ENCODE measurements at regions of chr14 and their contacts with region 1.

Region 1: GRCh38 chr14:35438910-35439713 is 34.6 kb upstream of the NFKBIA start:
- DNase-seq: peak; percentile 20
- H3K4me3 Mint-ChIP-seq: no peak overlapping the region
- H3K27ac Mint-ChIP-seq: no peak overlapping the region
- H3K4me1 Mint-ChIP-seq: no peaks in the 10 kb centered on the region
- H3K27me3 Mint-ChIP-seq: no peaks in the 10 kb centered on the region
- CTCF ChIP-seq: peak; percentile 39

Region 2: GRCh38 chr14:34699873-34700621 is 739.1 kb before region 1 on chr14:
- CTCF ChIA-PET with region 1: no interaction called
- POLR2A ChIA-PET with region 1: no interaction called
- intact Hi-C with region 1: no loop called
- DNase-seq: peak; percentile 80
- H3K4me3 Mint-ChIP-seq: peak overlapping the region; percentile 37
- H3K27ac Mint-ChIP-seq: peak overlapping the region; percentile 77
- H3K4me1 Mint-ChIP-seq: peaks cover 15% of the 10 kb centered on the region
- H3K27me3 Mint-ChIP-seq: no peaks in the 10 kb centered on the region
- CTCF ChIP-seq: no peak

Region 3: GRCh38 chr14:35068238-35069012 is 370.7 kb before region 1 on chr14:
- CTCF ChIA-PET with region 1: interaction called, 10 read pairs
- POLR2A ChIA-PET with region 1: no interaction called
- intact Hi-C with region 1: no loop called
- DNase-seq: no peak
- H3K4me3 Mint-ChIP-seq: no peak overlapping the region
- H3K27ac Mint-ChIP-seq: no peak overlapping the region
- H3K4me1 Mint-ChIP-seq: peaks cover 5% of the 10 kb centered on the region
- H3K27me3 Mint-ChIP-seq: no peaks in the 10 kb centered on the region
- CTCF ChIP-seq: no peak

Region 4: DNA sequence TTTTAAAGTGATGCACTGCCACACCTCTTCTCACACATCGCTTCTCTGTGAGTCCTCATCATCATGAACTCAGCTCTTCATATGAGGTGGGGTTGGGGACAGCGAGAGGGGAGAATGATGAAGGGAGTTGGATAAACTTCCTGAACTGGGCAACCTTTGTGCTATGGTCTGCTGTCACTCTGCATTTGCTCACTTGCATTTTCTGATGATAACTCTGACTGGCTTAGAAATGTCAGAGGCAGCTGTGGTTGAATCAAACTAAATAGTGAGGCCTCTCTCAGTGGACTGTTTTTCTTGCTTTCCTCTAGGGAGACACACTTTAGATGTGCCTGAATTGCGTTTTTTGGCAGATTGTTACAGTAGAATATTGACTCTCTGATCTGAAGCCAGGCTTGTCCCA is 20.7 kb after region 1 on chr14:
- CTCF ChIA-PET with region 1: no interaction called
- POLR2A ChIA-PET with region 1: no interaction called
- intact Hi-C with region 1: no loop called
- DNase-seq: no peak
- H3K4me3 Mint-ChIP-seq: no peak overlapping the region
- H3K27ac Mint-ChIP-seq: no peak overlapping the region
- H3K4me1 Mint-ChIP-seq: no peaks in the 10 kb centered on the region
- H3K27me3 Mint-ChIP-seq: no peaks in the 10 kb centered on the region
- CTCF ChIP-seq: no peak

Region 5: DNA sequence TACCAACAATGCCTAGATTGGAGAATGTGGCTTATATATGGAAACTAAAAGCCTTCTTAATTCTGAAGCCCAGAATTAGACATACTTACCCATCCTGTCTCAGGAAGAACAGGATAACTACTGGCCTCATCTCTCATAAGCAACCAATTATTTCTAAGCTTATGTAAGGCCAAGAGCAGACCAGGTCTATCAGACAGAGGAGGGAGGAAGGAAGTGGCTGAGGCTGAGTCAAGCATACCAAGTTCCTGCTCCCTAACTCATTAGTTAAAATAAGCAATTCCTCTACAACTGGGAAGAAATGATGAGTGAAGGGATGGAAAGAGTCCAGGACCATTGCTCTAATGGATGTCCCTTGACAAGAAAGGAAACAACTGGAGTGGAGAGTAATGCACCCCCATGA is 67.8 kb after region 1 on chr14:
- CTCF ChIA-PET with region 1: no interaction called
- POLR2A ChIA-PET with region 1: no interaction called
- intact Hi-C with region 1: no loop called
- DNase-seq: no peak
- H3K4me3 Mint-ChIP-seq: no peak overlapping the region
- H3K27ac Mint-ChIP-seq: no peak overlapping the region
- H3K4me1 Mint-ChIP-seq: no peaks in the 10 kb centered on the region
- H3K27me3 Mint-ChIP-seq: peaks cover 23% of the 10 kb centered on the region
- CTCF ChIP-seq: no peak

Region 6: DNA sequence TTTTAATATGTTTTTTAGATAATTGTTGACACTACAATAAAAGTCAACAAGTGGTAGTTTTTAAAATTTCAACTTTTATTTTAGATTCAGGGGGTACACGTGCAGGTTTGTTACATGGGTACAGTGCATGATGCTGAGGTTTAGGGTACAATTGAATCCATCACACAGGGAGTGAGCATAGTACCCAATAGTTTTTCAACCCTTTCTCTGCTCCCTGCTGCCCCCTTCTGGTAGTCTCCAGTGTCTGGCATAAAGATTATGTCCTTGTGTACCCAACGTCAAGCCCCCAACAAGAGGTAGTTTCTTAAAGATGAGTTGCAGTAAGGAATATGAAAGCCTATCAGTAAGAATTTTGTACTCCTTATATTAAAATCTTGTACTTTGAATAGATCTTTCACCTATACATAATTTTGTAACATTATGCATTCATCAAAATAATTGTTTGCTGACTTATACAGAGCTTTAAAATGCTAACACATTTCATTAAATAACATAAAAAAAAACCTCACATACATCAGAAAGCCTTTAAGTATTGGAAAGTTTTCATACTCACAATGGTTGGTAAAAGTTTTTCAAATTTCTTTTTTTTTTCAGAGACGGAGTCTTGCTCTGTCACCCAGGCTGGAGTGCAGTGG is 375.4 kb after region 1 on chr14:
- CTCF ChIA-PET with region 1: no interaction called
- POLR2A ChIA-PET with region 1: no interaction called
- intact Hi-C with region 1: loop called (anchors 10 kb)
- DNase-seq: peak; percentile 82
- H3K4me3 Mint-ChIP-seq: no peak overlapping the region
- H3K27ac Mint-ChIP-seq: no peak overlapping the region
- H3K4me1 Mint-ChIP-seq: peaks cover under 1% of the 10 kb centered on the region
- H3K27me3 Mint-ChIP-seq: no peaks in the 10 kb centered on the region
- CTCF ChIP-seq: peak; percentile 77

Measured in MCF 10A (cell line).